ENCODE measurements at regions of chr3 and their contacts with region 1.

Region 1: GRCh38 chr3:88058591-88059368 is at the starts of genes CGGBP1 and ZNF654:
- DNase-seq: peak; percentile 99
- H3K4me3 Mint-ChIP-seq: peak within 1 kb of the TSS; percentile 96
- H3K27ac Mint-ChIP-seq: peak within 1 kb of the TSS; percentile 98
- H3K4me1 Mint-ChIP-seq: peaks cover 50% of the 10 kb centered on the region
- H3K27me3 Mint-ChIP-seq: no peaks in the 10 kb centered on the region
- total RNA-seq, gene CGGBP1: 87.7 to 88.9 TPM
- total RNA-seq, gene ZNF654: 15.6 to 16.7 TPM

Region 2: DNA sequence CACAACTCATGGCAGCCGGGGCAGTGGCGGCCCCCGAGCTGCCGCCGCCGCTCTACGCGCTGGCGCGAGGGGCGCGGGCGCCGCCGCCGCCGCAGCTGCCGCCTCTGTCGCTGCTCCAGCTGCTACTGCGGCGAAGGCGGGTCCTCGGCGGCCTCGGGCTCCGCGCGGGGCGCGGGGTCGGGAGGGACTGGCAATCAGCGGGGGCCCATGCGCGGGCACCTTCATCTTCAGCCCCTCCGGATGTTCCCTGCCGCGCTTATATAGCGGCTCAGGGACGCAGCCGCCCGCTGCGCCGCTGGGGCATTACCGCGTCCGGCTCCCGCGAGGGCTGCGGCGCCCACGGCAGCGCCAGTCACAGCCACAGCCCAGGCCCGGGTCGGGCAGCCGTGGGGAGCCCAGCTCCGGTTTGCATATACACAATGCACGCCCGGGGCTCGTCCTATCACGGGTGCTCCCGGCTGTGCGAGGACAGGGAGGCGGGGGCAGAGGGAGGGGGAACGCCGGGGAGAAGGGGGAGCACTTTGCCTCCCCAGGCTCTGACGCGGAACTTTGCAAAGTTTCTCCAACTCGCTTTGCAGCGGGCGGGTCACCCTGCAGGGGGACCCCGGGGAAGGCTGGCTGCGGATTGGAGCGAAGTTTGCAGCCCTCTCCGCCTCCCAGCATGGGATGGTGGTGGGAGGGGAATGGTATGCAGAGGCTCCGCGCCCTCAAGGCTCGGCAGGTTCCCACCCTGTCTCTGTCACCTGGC is 1067.9 kb before region 1 on chr3 and contains the start of gene VGLL3:
- CTCF ChIA-PET with region 1: no interaction called
- POLR2A ChIA-PET with region 1: no interaction called
- intact Hi-C with region 1: no loop called
- DNase-seq: peak; percentile 8
- H3K4me3 Mint-ChIP-seq: peak within 1 kb of the TSS; percentile 32
- H3K27ac Mint-ChIP-seq: no peak within 1 kb of the TSS
- H3K4me1 Mint-ChIP-seq: peaks cover 3% of the 10 kb centered on the region
- H3K27me3 Mint-ChIP-seq: peaks cover 14% of the 10 kb centered on the region
- total RNA-seq, gene VGLL3: not detected

Region 3: DNA sequence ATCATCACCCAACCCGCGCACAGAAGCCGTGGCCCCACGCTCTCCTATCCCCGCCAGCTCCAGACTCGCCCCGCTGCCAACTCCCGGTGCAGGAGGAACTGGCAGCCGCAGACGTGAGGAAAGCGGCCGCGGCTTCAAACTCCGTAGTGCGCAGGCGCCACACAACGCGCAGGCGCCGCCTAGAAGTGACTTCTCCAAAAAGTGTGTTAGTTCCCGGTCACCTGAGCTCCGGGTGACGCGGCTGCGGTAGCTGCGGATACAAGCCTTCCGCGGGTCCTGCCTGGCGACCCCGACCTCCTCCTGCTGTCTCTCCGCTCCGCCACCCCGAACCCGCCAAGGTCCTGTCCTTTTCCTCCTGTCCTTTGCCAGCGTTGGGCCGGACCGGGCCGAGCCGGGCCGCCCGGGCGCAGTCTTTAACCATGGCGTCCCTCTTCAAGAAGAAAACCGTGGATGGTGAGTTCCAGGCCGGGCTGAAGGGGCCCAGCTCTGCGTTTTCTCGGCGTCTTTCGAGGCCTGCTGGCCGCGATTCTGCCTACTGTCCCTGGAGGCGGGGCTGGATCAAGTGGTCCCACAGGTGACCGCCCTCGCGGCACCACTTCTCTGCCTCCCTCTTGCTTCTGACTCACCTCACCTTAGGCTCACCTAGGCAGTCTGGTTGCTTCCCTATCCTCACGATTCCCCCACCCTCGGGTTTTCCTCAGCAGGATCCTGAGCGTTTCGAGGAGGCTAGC is 831.5 kb before region 1 on chr3 and contains the start of gene CHMP2B:
- CTCF ChIA-PET with region 1: no interaction called
- POLR2A ChIA-PET with region 1: no interaction called
- intact Hi-C with region 1: loop called (anchors 2 kb)
- DNase-seq: peak; percentile 94
- H3K4me3 Mint-ChIP-seq: peak within 1 kb of the TSS; percentile 89
- H3K27ac Mint-ChIP-seq: peak within 1 kb of the TSS; percentile 89
- H3K4me1 Mint-ChIP-seq: peaks cover 33% of the 10 kb centered on the region
- H3K27me3 Mint-ChIP-seq: peaks cover 3% of the 10 kb centered on the region
- total RNA-seq, gene CHMP2B: 28.4 to 29.0 TPM

Region 4: DNA sequence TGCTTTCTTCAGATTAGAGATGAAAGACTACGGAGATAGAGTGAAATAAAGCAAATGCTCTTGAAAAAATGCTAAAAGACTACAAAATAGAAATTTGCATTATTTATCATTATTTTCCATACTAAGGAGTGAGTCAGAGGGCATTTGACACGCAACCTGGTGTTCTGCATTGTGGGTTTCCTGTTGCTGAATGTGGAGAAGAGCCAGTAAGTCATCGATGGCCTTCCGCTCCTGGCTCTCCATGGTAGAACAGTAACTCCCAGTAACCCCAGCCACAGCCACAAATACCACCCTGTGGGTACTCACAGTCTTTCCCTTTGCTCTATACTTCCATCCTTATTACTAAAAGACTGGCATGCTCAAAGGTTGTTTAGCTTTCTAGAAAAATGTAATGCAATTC is 61.5 kb before region 1 on chr3:
- CTCF ChIA-PET with region 1: interaction called, 3 read pairs
- POLR2A ChIA-PET with region 1: no interaction called
- intact Hi-C with region 1: loop called (anchors 2 kb)
- DNase-seq: peak; percentile 75
- H3K4me3 Mint-ChIP-seq: peak overlapping the region; percentile 22
- H3K27ac Mint-ChIP-seq: no peak overlapping the region
- H3K4me1 Mint-ChIP-seq: peaks cover 16% of the 10 kb centered on the region
- H3K27me3 Mint-ChIP-seq: peaks cover 2% of the 10 kb centered on the region

Region 5: GRCh38 chr3:88031642-88032077 is 27.1 kb before region 1 on chr3:
- CTCF ChIA-PET with region 1: no interaction called
- POLR2A ChIA-PET with region 1: interaction called, 8 read pairs
- intact Hi-C with region 1: loop called (anchors 1 kb)
- DNase-seq: peak; percentile 22
- H3K4me3 Mint-ChIP-seq: peak overlapping the region; percentile 76
- H3K27ac Mint-ChIP-seq: peak overlapping the region; percentile 84
- H3K4me1 Mint-ChIP-seq: peaks cover 23% of the 10 kb centered on the region
- H3K27me3 Mint-ChIP-seq: no peaks in the 10 kb centered on the region

Region 6: GRCh38 chr3:88044411-88044810 is 14.4 kb before region 1 on chr3:
- CTCF ChIA-PET with region 1: no interaction called
- POLR2A ChIA-PET with region 1: no interaction called
- intact Hi-C with region 1: no loop called
- DNase-seq: no peak
- H3K4me3 Mint-ChIP-seq: no peak overlapping the region
- H3K27ac Mint-ChIP-seq: no peak overlapping the region
- H3K4me1 Mint-ChIP-seq: peaks cover 8% of the 10 kb centered on the region
- H3K27me3 Mint-ChIP-seq: no peaks in the 10 kb centered on the region

Region 7: GRCh38 chr3:88149509-88150362 is 91.0 kb after region 1 on chr3 and contains the start of gene C3orf38:
- CTCF ChIA-PET with region 1: interaction called, 3 read pairs
- POLR2A ChIA-PET with region 1: interaction called, 35 read pairs
- intact Hi-C with region 1: loop called (anchors 1 kb)
- DNase-seq: peak; percentile 84
- H3K4me3 Mint-ChIP-seq: peak within 1 kb of the TSS; percentile 96
- H3K27ac Mint-ChIP-seq: peak within 1 kb of the TSS; percentile 99
- H3K4me1 Mint-ChIP-seq: peaks cover 30% of the 10 kb centered on the region
- H3K27me3 Mint-ChIP-seq: no peaks in the 10 kb centered on the region
- total RNA-seq, gene C3orf38: 25.1 to 25.8 TPM